IMR-90 (cell line): ENCODE measurements at regions of chr12 and their contacts with region 1.

Region 1: GRCh38 chr12:82709794-82710355 is 23.2 kb downstream of the TMTC2 start:
- DNase-seq: no peak
- ATAC-seq: no peak
- H3K4me3 ChIP-seq: no peak overlapping the region
- H3K27ac ChIP-seq: no peak overlapping the region
- H3K4me1 ChIP-seq: no peaks in the 10 kb centered on the region
- H3K27me3 ChIP-seq: no peaks in the 10 kb centered on the region
- CTCF ChIP-seq: no peak
- POLR2A ChIP-seq: no peak
- RAD21 ChIP-seq: no peak

Region 2: DNA sequence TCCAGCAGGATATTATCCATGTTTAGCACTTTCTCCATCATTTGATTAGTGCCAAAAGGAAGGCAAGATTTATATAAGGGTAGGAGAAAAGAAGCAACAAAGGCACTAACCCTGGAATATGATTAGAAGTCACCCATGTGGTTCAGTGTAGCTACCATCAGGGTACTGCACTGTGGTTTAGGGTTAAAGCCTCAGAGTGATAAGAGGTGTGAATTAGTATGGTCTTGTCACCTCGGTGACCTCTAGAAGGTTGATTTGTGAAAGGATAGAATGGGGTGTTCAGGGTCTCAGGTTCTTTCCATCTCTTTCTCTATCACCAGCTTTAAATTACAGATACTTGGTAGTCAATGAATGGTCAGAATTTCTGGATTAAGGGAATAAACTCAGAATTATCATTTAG is 126.1 kb before region 1 on chr12:
- CTCF ChIA-PET with region 1: no interaction called
- POLR2A ChIA-PET with region 1: no interaction called
- dilution Hi-C with region 1: no loop called
- in situ Hi-C with region 1: no loop called
- intact Hi-C with region 1: no loop called
- DNase-seq: no peak
- ATAC-seq: no peak
- H3K4me3 ChIP-seq: no peak overlapping the region
- H3K27ac ChIP-seq: no peak overlapping the region
- H3K4me1 ChIP-seq: no peaks in the 10 kb centered on the region
- H3K27me3 ChIP-seq: no peaks in the 10 kb centered on the region
- CTCF ChIP-seq: no peak
- POLR2A ChIP-seq: no peak
- RAD21 ChIP-seq: no peak

Region 3: GRCh38 chr12:82730953-82731459 is 21.1 kb after region 1 on chr12:
- CTCF ChIA-PET with region 1: no interaction called
- POLR2A ChIA-PET with region 1: no interaction called
- dilution Hi-C with region 1: no loop called
- in situ Hi-C with region 1: no loop called
- intact Hi-C with region 1: loop called (anchors 1 kb)
- DNase-seq: peak; percentile 4
- ATAC-seq: no peak
- H3K4me3 ChIP-seq: no peak overlapping the region
- H3K27ac ChIP-seq: no peak overlapping the region
- H3K4me1 ChIP-seq: no peaks in the 10 kb centered on the region
- H3K27me3 ChIP-seq: no peaks in the 10 kb centered on the region
- CTCF ChIP-seq: no peak
- POLR2A ChIP-seq: no peak
- RAD21 ChIP-seq: no peak